WTC11 (cell line): ENCODE measurements at regions of chr11 and their contacts with region 1.

Region 1: DNA sequence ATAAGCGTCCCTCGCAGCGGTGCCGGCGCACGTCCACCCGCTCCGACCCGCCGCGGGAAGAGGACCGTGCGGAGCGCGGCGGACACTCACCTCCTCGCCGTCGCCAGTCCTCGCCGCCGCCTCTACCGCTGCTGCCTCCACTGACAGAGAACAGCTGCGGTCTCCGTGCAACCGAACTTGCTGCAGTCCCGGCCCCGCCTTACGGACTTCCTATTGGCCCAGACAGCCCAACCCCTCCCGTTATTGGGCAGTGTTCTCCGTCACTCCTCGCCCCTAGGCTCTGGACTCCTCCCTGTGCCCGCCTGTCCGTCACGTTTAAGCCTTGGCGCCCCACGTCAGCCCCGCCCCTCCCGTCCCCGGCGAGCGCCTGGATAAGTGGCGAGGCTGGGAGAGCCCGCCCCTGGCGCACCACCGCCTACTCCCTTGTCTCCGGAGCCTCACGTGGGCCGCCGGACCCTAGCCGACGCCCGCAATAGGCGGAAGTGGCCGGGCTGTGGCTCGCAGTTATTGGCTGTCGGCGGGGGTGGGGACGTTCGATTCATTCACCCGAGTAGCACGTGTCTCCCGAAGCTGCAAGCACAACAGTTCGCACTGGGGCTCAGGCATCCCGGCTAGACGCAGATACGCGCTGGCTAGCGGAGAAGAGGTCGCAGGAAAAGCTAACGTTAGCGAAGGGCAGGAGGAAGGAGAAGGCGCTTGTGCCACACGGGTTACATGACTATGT is at the start of gene PC:
- DNase-seq: peak; percentile 100
- ATAC-seq: peak; percentile 96
- H3K4me3 Mint-ChIP-seq: peak within 1 kb of the TSS; percentile 87
- H3K27ac Mint-ChIP-seq: peak within 1 kb of the TSS; percentile 99
- H3K4me1 Mint-ChIP-seq: peaks cover 26% of the 10 kb centered on the region
- H3K27me3 Mint-ChIP-seq: peaks cover 17% of the 10 kb centered on the region
- CTCF ChIP-seq: no peak
- total RNA-seq, gene PC: 22.1 to 27.2 TPM (median 25.6 TPM) in 3 replicates

Region 2: GRCh38 chr11:66915046-66915832 is 43.2 kb before region 1 on chr11:
- CTCF ChIA-PET with region 1: interaction called, 11 read pairs
- POLR2A ChIA-PET with region 1: no interaction called
- DNase-seq: no peak
- ATAC-seq: peak; percentile 78
- H3K4me3 Mint-ChIP-seq: no peak overlapping the region
- H3K27ac Mint-ChIP-seq: no peak overlapping the region
- H3K4me1 Mint-ChIP-seq: peaks cover 40% of the 10 kb centered on the region
- H3K27me3 Mint-ChIP-seq: no peaks in the 10 kb centered on the region; the same call in 1 of the 2 replicates
- CTCF ChIP-seq: no peak

Region 3: DNA sequence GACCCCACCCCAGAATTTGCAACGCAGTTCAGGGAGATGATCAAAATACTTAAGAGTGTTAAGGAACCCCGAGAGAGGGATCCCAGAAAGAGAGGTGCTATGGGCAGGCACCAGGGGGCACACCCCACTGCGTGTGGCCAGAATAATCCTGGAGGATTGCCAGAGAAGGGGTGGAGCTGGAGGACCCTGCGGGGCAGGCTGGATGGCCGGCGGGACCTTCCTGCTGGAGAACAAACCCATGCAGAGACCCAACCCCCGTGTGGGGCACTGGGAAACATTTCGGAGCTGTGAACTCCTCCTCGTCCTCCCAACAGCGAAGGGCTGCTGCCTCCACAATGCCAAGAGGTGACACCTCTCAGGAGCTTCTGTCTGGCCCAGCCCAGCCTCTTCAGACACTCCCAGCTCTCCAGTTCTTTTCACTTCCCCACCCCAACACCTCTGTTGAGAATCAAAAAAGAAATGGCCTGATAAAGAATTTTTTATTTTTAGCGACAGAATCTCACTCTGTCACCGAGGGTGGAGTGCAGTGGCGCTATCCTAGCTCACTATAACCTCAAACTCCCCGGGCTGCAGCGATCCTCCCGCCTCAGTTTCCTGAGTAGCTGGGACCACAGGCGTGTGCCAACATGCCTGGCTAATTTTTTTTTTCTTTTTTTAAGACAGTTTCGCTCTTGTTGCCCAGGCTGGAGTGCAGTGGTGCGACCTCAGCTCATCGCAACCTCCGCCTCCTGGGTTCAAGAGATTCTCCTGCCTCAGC is 123.8 kb after region 1 on chr11:
- CTCF ChIA-PET with region 1: no interaction called
- POLR2A ChIA-PET with region 1: no interaction called
- DNase-seq: peak; percentile 52
- ATAC-seq: peak; percentile 61
- H3K4me3 Mint-ChIP-seq: peak overlapping the region; percentile 62
- H3K27ac Mint-ChIP-seq: no peak overlapping the region
- H3K4me1 Mint-ChIP-seq: peaks cover 24% of the 10 kb centered on the region
- H3K27me3 Mint-ChIP-seq: no peaks in the 10 kb centered on the region
- CTCF ChIP-seq: no peak